Naive thymus-derived CD4-positive, alpha-beta T cell (primary cell): ENCODE measurements at regions of chr12 and their contacts with region 1.

Region 1: GRCh38 chr12:64650762-64651161 is 40.5 kb downstream of the RASSF3 start:
- DNase-seq: no peak
- ATAC-seq: no peak
- H3K4me3 ChIP-seq: no peak overlapping the region
- H3K4me3 Mint-ChIP-seq: peak overlapping the region in 9 of 10 donors; percentile 33 to 69 (median 59)
- H3K27ac ChIP-seq: peak overlapping the region; percentile 2
- H3K27ac Mint-ChIP-seq: peak overlapping the region in 8 of 9 donors; percentile 59 to 91 (median 86)
- H3K4me1 ChIP-seq: peaks cover 29 to 58% of the 10 kb centered on the region in 2 donors
- H3K4me1 Mint-ChIP-seq: peaks cover 49 to 96% (median 76%) of the 10 kb centered on the region in 7 donors
- H3K27me3 ChIP-seq: no peaks in the 10 kb centered on the region
- H3K27me3 Mint-ChIP-seq: no peaks in the 10 kb centered on the region

Region 2: DNA sequence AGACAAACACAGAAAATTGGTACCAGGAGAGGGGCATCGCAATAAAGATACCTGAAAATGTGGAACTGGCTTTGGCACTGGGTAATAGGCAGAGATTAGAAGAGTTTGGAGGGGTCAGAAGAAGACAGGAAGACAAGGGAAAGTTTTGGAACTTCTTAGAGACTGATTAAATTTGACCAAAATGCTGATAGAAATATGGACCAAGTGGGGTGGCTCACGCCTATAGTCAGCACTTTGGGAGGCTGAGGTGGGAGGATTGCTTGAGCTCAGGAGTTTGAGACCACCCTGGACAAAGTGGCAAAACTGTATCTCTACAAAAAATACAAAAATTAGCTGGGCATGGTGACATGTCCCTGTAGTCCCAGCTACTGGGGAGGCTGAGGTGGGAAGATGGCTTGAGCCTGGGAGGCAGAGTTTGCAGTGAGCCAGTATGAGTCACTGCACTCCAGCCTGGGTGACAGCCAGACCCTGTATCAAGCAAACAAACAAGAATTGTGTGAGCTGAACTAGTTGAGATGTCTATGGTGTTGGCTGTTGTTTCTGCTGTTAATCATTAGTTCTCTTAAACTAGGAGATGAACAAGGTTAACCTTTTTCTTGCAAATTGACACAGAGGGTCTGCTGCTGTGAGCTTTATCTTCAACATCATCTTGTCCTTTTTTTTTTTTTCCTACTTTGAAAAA is 17.0 kb before region 1 on chr12:
- CTCF ChIA-PET with region 1: interaction called, 3 read pairs
- POLR2A ChIA-PET with region 1: interaction called, 3 read pairs
- intact Hi-C with region 1: loop called in 1 of 2 experiments (anchors 1 kb)
- DNase-seq: no peak
- ATAC-seq: peak; percentile 63
- H3K4me3 ChIP-seq: no peak overlapping the region
- H3K4me3 Mint-ChIP-seq: peak overlapping the region in 9 of 10 donors; percentile 39 to 88 (median 63)
- H3K27ac ChIP-seq: peak overlapping the region; percentile 52
- H3K27ac Mint-ChIP-seq: peak overlapping the region; percentile 7 to 90 (median 87)
- H3K4me1 ChIP-seq: peaks cover 46 to 72% of the 10 kb centered on the region in 2 donors
- H3K4me1 Mint-ChIP-seq: peaks cover 50 to 95% (median 82%) of the 10 kb centered on the region in 7 donors
- H3K27me3 ChIP-seq: no peaks in the 10 kb centered on the region
- H3K27me3 Mint-ChIP-seq: no peaks in the 10 kb centered on the region

Region 3: GRCh38 chr12:64744422-64745258 is 93.9 kb after region 1 on chr12:
- CTCF ChIA-PET with region 1: no interaction called
- POLR2A ChIA-PET with region 1: no interaction called
- intact Hi-C with region 1: no loop called
- DNase-seq: no peak
- ATAC-seq: no peak
- H3K4me3 ChIP-seq: no peak overlapping the region
- H3K4me3 Mint-ChIP-seq: no peak overlapping the region
- H3K27ac ChIP-seq: no peak overlapping the region
- H3K27ac Mint-ChIP-seq: peak overlapping the region in 1 of 9 donors; percentile 28
- H3K4me1 ChIP-seq: no peaks in the 10 kb centered on the region
- H3K4me1 Mint-ChIP-seq: peaks cover 0 to 8% (median 0%) of the 10 kb centered on the region in 7 donors
- H3K27me3 ChIP-seq: no peaks in the 10 kb centered on the region
- H3K27me3 Mint-ChIP-seq: no peaks in the 10 kb centered on the region

Region 4: DNA sequence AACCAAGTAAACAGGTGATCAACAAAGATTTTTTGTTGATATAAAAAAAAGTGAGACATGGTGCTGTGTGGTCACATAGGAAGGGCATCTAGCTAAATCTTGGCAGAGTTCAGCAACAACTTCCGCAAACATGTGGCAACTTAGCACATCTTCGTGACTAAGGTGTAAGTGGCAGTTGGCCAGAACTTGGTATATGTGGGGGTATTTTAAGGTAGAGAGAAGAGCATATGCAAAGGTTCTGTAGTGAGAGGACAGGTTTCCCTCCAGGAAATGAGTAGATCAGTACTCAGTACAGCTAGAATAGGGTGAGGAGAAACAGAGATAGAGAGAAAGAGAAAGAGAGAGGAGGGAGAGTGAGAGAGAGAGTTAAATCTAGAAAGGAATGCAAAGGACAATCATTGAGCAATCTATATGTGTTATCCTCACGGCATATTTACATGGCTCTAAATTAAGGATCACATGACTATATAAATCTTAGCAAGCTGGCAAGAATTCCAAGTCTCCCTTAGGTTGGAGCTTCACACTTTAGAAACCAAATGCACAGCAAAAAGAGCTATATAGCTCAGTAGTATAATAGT is 945.8 kb after region 1 on chr12:
- CTCF ChIA-PET with region 1: no interaction called
- POLR2A ChIA-PET with region 1: no interaction called
- intact Hi-C with region 1: no loop called
- DNase-seq: no peak
- ATAC-seq: no peak
- H3K4me3 ChIP-seq: no peak overlapping the region
- H3K4me3 Mint-ChIP-seq: no peak overlapping the region
- H3K27ac ChIP-seq: no peak overlapping the region
- H3K27ac Mint-ChIP-seq: no peak overlapping the region
- H3K4me1 ChIP-seq: no peaks in the 10 kb centered on the region
- H3K4me1 Mint-ChIP-seq: peaks cover 0 to 7% (median 0%) of the 10 kb centered on the region in 7 donors
- H3K27me3 ChIP-seq: no peaks in the 10 kb centered on the region
- H3K27me3 Mint-ChIP-seq: peaks cover 21 to 51% (median 32%) of the 10 kb centered on the region in 5 donors